Thyroid gland (tissue), 4 donors: ENCODE measurements at regions of chr22 and their contacts with region 1.

Region 1: GRCh38 chr22:19432133-19432851 is at the start of gene MRPL40:
- DNase-seq: peak; percentile 96
- H3K4me3 ChIP-seq: peak within 1 kb of the TSS; percentile 78 to 98 (median 91)
- H3K27ac ChIP-seq: peak within 1 kb of the TSS; percentile 98 to 99 (median 99)
- H3K4me1 ChIP-seq: peaks cover 35 to 39% of the 10 kb centered on the region in 2 donors
- H3K27me3 ChIP-seq: no peaks in the 10 kb centered on the region
- CTCF ChIP-seq: peak in 2 of 6 experiments; percentile 2 to 29
- POLR2A ChIP-seq: peak; percentile 73 to 94
- total RNA-seq, gene MRPL40: 37.5 to 69.3 (median 48.7) TPM

Region 2: DNA sequence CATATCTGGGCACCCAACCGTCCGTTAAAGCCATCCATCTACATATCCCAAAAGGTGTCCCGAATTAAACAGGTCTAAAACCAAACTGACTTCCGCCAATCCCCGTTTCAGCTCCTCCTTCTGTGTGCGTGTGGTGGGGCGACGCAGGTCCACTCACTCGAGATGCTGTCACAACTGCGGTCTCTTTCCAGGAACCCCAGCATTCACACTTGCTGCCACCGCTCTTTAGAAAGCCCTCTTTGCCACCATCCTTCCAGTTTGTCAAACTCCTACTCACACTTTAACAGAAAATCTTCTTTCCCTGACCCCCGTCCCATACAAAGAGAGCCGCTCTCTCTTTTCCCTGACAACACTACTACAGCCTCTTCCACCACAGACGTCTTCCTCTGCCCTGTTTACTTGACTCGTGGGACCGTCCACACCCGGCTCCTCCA is 288.3 kb before region 1 on chr22:
- intact Hi-C with region 1: loop called (anchors 10 kb)
- DNase-seq: no peak
- H3K4me3 ChIP-seq: peak overlapping the region; percentile 70 to 85 (median 81)
- H3K27ac ChIP-seq: peak overlapping the region in 2 of 3 donors; percentile 43 to 61
- H3K4me1 ChIP-seq: peaks cover 5 to 9% of the 10 kb centered on the region in 2 donors
- H3K27me3 ChIP-seq: peaks cover 2% of the 10 kb centered on the region
- CTCF ChIP-seq: no peak
- POLR2A ChIP-seq: no peak

Region 3: GRCh38 chr22:19357270-19358105 is 74.8 kb before region 1 on chr22:
- intact Hi-C with region 1: loop called (anchors 10 kb)
- DNase-seq: peak; percentile 83 to 85
- H3K4me3 ChIP-seq: no peak overlapping the region
- H3K27ac ChIP-seq: peak overlapping the region; percentile 99
- H3K4me1 ChIP-seq: peaks cover 73 to 79% of the 10 kb centered on the region in 2 donors
- H3K27me3 ChIP-seq: no peaks in the 10 kb centered on the region
- CTCF ChIP-seq: peak in 1 of 6 experiments; percentile 5
- POLR2A ChIP-seq: peak in 1 of 2 donors; percentile 56

Region 4: GRCh38 chr22:19568337-19569275 is 136.3 kb after region 1 on chr22:
- intact Hi-C with region 1: no loop called
- DNase-seq: peak in 1 of 2 donors; percentile 22
- H3K4me3 ChIP-seq: no peak overlapping the region
- H3K27ac ChIP-seq: peak overlapping the region in 2 of 3 donors; percentile 15
- H3K4me1 ChIP-seq: peaks cover 0 to 22% of the 10 kb centered on the region in 2 donors
- H3K27me3 ChIP-seq: no peaks in the 10 kb centered on the region
- CTCF ChIP-seq: no peak
- POLR2A ChIP-seq: no peak

Region 5: DNA sequence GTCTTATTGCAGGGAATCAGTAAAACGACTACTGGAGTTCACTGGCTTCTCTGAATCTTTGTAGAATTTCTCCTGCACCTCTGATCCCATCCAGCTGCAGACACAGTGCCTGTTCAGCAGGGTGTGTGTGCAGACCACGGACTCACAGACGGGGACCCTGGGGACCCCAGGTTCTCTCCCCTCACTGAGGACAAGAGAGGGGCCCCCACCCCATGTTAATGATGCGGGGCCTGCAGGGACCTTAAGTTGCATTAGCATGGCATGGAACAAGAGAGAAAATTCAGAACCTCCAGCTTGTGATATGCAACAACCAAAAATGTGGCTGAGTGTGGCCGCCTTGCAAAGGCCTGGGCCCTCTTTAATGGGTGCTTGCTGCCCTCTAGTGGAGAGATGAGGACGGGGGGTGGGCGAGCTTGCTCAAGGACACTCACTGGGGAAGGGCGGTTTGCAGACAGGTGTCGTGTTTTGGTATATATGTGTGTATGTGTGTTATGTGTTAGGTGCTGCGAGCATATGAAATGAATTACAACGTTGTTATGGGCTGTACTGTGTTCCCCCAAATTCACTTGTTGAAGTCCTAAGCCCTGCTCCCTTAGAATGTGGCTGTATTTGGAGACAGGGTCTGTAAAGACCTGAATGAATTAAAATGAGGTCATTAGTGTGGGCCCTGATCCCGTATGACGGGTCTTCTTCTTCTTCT is 197.6 kb after region 1 on chr22:
- intact Hi-C with region 1: no loop called
- DNase-seq: peak; percentile 83 to 86
- H3K4me3 ChIP-seq: no peak overlapping the region
- H3K27ac ChIP-seq: no peak overlapping the region
- H3K4me1 ChIP-seq: no peaks in the 10 kb centered on the region
- H3K27me3 ChIP-seq: no peaks in the 10 kb centered on the region
- CTCF ChIP-seq: peak; percentile 40 to 94 (median 89)
- POLR2A ChIP-seq: no peak